ENCODE measurements at regions of chrX and their contacts with region 1.

Region 1: GRCh38 chrX:110086916-110087484 is 84.1 kb downstream of the TMEM164 start:
- DNase-seq: peak; percentile 72 to 94
- ATAC-seq: peak; percentile 84 to 86
- H3K4me3 ChIP-seq: no peak overlapping the region; the same call in 1 of the 3 replicates
- H3K27ac ChIP-seq: peak overlapping the region; percentile 96 to 99
- H3K4me1 ChIP-seq: peaks cover 72% of the 10 kb centered on the region
- CTCF ChIP-seq: no peak
- EP300 ChIP-seq: peak; percentile 59 to 75; a peak in 3 of 5 replicates
- POLR2A ChIP-seq: no peak
- RAD21 ChIP-seq: no peak; a peak in 1 of 5 replicates

Region 2: DNA sequence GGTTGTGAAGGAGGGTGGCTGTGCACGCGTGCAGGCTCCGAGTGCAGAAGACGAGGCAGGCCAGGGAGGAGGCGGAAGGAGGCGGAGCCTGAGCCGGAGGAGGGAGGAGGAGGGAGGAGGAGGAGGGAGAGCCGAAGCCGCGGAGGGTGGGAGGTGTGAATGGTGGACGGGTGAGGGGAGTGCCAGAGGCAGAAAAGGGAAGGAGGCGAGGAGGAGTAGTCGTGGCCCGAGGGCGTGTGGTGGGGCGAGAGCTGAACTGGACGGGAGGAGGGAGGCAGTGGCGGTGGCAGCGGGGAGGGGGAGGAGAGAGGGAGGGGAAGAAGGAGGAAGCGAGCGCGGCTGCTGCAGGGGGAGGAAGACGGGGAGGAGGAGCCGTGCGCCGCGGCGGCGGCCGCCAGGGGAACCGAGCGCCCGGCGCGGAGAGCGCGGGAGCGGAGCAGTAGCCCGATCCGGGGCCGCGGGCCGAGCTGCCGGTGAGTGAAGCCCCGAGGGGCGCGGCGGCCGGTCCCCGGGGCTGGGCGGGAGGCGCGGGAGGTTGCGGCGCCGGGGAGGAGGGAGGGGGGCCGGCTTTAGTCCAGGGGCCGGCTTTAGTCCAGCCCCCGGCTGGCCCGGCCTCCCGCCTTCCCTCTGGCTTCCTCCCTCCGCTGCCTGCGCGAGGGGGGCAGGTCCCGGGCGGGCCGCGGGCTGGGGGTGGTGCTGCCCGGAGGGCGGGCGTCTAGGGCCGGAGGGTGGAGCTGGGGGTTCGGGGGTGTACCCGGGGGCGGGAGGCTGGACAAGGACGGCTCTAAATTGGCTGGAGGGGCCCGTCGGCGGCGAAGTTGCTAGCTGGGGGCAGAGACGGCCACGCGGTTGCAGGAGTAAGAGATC is 84.5 kb before region 1 on chrX and contains the start of gene TMEM164:
- CTCF ChIA-PET with region 1: no interaction called
- POLR2A ChIA-PET with region 1: interaction called, 32 read pairs
- DNase-seq: peak; percentile 69 to 80
- ATAC-seq: peak; percentile 87 to 92
- H3K4me3 ChIP-seq: peak within 1 kb of the TSS; percentile 84
- H3K27ac ChIP-seq: peak within 1 kb of the TSS; percentile 100
- H3K4me1 ChIP-seq: peaks cover 47% of the 10 kb centered on the region
- CTCF ChIP-seq: no peak
- EP300 ChIP-seq: no peak
- POLR2A ChIP-seq: peak; percentile 83
- RAD21 ChIP-seq: no peak
- polyA plus RNA-seq, gene TMEM164: 32.0 and 36.3 TPM in 2 replicates

Region 3: DNA sequence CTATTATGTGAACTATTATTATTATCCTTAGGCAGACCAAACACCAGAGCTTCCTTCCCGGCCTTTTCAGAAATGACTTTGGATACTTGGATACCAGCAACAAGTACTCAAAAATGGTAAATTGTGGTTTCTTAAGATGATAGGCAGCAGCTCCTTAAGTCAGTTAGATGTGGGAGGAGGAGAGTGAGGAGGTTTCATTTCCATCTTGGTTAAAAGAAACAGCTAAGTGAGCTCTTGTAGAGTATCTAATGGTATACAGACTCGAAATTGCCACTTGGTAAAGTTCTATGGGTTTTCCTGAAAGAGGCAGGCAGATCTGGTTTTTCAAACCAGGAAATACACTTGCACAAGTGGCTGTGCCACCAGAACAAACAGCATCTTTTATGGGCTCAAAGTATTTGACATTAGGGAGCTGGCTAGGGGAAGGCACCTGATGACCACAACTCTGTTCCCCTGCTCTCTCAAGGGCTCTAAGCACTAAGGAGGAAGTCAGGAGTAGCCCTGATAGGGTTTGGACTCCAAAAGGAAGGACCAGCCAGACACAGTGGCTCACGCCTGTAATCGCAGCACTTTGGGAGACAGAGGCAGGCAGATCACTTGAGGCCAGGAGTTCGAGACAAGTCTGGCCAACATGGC is 46.9 kb after region 1 on chrX:
- CTCF ChIA-PET with region 1: no interaction called
- POLR2A ChIA-PET with region 1: no interaction called
- DNase-seq: no peak
- ATAC-seq: no peak
- H3K4me3 ChIP-seq: no peak overlapping the region
- H3K27ac ChIP-seq: no peak overlapping the region
- H3K4me1 ChIP-seq: peaks cover 18% of the 10 kb centered on the region
- CTCF ChIP-seq: no peak
- EP300 ChIP-seq: no peak
- POLR2A ChIP-seq: no peak
- RAD21 ChIP-seq: no peak

Region 4: DNA sequence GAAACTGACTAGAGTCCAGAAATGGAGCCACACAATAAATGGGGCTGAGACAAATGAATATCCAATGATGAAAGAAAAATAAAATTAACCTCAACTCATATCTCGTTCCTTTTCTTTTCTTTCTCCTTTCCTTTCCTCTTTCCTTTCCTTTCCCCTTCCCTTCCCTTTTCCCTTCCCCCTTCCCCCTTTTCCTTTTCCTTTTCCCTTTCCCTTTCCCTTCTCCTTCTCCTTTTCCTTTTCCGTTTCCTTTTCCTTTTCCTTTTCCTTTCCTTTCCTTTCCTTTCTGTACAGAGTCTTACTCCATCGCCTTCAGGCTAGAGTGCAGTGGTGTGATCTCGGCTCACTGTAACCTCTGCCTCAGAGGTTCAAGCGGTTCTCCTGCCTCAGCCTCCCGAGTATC is 417.9 kb after region 1 on chrX:
- CTCF ChIA-PET with region 1: no interaction called
- POLR2A ChIA-PET with region 1: no interaction called
- DNase-seq: no peak
- ATAC-seq: no peak
- H3K4me3 ChIP-seq: no peak overlapping the region
- H3K27ac ChIP-seq: no peak overlapping the region
- H3K4me1 ChIP-seq: no peaks in the 10 kb centered on the region
- CTCF ChIP-seq: no peak
- EP300 ChIP-seq: no peak
- POLR2A ChIP-seq: no peak
- RAD21 ChIP-seq: no peak

Measured in A549 (cell line).